Astrocyte of the cerebellum (primary cell): ENCODE measurements at regions of chr2 and their contacts with region 1.

Region 1: GRCh38 chr2:172921532-172922236 is 154.0 kb upstream of the MAP3K20 start:
- DNase-seq: no peak
- H3K4me3 ChIP-seq: no peak overlapping the region
- CTCF ChIP-seq: no peak

Region 2: DNA sequence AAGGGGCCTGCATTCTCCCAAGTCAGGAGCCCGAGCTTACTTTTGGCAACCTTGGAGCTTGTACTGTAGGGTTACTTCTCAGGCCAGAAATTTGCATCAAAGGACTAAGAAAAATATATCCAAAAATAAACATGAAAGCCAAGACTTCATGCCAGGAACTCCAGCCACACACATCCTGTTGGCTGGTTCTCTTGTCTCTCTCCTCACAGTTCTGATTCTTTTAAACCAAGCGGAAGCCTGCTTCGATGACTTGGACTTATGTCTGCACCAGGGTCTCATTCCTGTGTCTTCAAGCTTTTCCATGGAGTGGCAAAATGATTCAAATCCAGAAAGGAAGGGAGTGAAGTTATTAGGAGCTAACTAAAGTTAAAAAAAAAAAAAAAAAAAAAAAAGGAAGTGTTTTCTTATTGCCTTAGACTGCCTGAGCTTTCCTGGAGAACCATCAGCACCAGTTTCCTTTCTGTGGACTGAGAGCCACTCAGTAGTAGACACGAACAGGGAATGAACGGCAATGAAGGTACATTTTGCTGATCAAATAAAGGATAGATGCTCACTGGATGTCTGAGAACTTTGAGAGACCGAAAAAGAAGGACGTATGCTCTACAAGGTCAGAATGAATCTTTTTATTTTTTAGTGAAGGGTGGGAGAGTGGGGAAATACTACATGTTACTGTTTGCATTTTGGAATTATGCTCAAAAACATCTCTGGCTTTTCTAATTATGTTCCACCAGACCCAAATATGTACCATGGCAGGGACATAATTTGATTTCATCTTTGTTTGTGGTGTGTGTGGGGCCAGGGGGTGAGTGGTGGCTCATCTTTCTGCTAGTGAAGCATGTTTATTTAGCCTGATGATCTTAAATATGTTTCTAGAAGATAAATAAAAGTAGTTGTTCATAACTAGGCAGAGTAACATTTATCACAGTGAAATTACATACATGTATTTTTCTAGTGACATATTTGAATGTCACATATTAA is 100.0 kb before region 1 on chr2:
- in situ Hi-C with region 1: loop called (anchors 5 kb)
- DNase-seq: peak; percentile 49
- H3K4me3 ChIP-seq: no peak overlapping the region
- CTCF ChIP-seq: no peak